ENCODE measurements at regions of chr16 and their contacts with region 1.

Region 1: DNA sequence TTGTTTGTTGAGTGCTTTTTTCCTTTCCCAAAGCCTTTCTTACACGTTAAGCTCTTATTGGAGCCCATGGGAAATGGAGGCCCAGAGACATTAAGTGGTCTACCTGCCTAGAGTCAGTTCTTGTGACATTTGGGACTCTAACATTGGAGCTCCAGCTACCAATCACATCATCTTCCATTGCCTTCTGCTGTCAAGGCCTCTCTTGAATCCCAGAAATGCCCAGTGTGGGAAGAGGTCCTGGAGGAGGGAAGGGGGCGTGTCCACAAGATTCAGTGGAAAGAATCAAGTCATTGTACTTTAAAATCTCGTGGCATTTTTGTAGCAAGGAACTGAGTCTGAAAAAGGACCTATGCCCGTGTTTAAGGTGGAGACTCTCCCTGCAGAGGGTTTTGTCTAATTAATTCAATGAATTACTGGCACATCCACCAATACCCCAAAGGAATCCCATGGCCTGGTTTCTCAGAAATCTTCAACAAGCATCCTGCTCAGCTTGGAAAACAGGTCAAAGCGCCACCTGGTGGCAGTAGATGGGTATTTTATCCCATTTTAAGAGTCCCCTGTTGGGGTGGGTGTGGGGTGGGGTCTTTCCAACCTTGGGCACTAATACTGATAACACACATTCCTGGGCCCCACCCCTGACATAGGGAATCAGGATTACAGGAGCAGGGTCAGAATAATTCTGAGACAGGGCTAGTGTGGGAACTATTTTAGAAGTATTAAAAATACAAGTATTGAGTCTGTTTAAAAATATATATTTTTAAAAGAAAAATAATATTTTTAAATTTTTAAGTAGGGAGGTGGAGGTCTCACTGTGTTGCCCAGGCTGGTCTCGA is 24.6 kb downstream of the GPT2 start:
- DNase-seq: peak in 36 of 42 donors; percentile 40 to 87 (median 68)

Region 2: GRCh38 chr16:46853713-46854443 is 54.9 kb before region 1 on chr16:
- intact Hi-C with region 1: loop called (anchors 5 kb)
- DNase-seq: peak; percentile 74 to 95 (median 89)

Region 3: GRCh38 chr16:47136101-47136820 is 227.5 kb after region 1 on chr16:
- intact Hi-C with region 1: no loop called
- DNase-seq: no peak

Region 4: DNA sequence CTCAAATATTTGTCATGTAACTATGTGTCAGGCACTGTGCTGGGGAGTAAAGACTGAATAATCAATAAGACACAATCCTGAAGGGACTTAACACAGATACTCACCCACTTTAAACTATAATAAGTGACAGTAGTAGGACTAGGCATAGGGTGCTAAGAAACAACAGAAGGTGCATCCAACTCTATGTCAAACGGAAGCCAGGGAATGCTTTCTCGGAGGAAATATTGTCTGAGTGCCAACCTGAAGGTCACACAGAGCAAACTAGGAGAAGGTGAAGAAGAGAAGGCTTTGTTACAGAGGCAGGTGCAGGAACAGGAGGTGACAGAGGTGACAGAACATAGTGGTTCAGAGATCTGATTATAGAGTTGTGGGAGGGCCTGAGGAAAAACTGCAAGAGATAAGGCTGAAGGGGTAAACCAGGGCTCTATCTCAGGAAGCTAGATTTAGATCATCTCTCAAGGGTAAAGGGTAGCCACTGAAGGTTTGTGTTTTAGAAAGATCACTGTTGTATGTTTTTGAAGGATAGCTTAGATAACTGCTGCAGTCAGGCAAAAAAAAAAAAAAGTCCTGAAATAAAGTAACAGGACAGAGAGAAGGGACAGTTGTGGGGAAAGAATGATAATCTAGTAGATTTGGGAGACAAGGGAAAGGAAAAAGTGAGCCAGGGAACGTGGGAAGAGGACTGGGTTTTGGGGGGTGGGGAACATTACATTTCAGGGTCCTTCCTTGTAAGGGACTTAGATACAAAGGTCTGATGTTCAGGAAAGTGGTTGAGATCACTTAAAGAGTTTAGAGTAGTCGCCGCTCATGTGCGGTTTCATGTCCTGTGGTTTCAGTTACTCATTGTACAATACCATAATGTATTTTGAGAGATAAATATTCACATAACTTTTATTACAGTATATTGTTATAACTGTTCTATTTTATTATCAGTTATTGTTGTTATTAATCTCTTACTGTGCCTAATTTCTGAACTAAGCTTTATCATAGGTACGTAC is 320.6 kb after region 1 on chr16:
- intact Hi-C with region 1: no loop called
- DNase-seq: no peak

Region 5: DNA sequence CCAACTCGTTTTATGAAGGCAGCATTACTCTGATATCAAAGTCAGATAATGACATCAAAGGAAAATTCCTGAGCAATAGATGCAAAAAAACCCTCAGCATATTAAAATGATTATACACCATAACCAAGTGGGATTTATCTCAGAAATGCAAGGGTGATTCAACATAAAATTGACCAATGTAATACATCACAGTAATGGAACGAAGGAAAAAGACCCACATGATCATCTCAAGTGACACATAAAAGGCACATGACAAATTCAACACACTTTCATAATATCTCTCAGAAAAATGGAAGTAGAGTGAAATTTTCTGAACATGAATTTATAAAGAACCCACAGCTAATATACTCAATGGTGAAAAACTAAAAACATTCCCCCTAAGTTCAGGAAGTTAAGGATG is 433.3 kb after region 1 on chr16:
- intact Hi-C with region 1: no loop called
- DNase-seq: no peak